WTC11 (cell line): ENCODE measurements at regions of chr16 and their contacts with region 1.

Region 1: GRCh38 chr16:21001262-21001661 is 100.7 kb downstream of the LYRM1 start:
- DNase-seq: peak; percentile 64
- ATAC-seq: peak; percentile 85
- H3K4me3 Mint-ChIP-seq: no peak overlapping the region
- H3K27ac Mint-ChIP-seq: no peak overlapping the region
- H3K4me1 Mint-ChIP-seq: no peaks in the 10 kb centered on the region
- H3K27me3 Mint-ChIP-seq: no peaks in the 10 kb centered on the region
- CTCF ChIP-seq: no peak; the same call in 1 of the 2 replicates

Region 2: GRCh38 chr16:20948444-20948843 is 52.8 kb before region 1 on chr16:
- CTCF ChIA-PET with region 1: interaction called, 10 read pairs
- POLR2A ChIA-PET with region 1: no interaction called
- DNase-seq: no peak
- ATAC-seq: no peak
- H3K4me3 Mint-ChIP-seq: no peak overlapping the region
- H3K27ac Mint-ChIP-seq: no peak overlapping the region
- H3K4me1 Mint-ChIP-seq: peaks cover 21% of the 10 kb centered on the region
- H3K27me3 Mint-ChIP-seq: no peaks in the 10 kb centered on the region
- CTCF ChIP-seq: no peak

Region 3: DNA sequence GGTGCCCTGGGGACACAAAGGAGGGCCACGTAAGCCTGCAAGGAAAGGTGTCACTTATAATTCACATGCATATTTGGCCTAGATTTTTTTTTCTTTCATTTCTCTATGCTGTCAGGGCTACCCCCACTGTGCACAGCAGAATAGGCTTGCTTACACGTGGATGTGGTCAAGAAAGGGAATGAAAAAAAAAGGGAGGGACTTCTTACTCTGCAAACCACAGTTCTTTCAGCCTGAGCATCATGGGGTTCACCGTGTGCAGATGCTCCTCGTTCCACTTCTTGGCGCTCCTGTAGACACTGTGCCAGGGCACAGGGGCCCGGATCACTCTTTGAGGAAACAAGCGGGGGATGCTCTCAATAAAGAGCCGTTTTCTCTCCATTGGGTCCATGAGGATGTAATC is 132.8 kb after region 1 on chr16:
- CTCF ChIA-PET with region 1: no interaction called
- POLR2A ChIA-PET with region 1: no interaction called
- DNase-seq: no peak
- ATAC-seq: no peak
- H3K4me3 Mint-ChIP-seq: no peak overlapping the region
- H3K27ac Mint-ChIP-seq: no peak overlapping the region
- H3K4me1 Mint-ChIP-seq: peaks cover 16% of the 10 kb centered on the region
- H3K27me3 Mint-ChIP-seq: peaks cover 3% of the 10 kb centered on the region; the same call in 1 of the 2 replicates
- CTCF ChIP-seq: no peak